Calu3 (cell line): ENCODE measurements at regions of chr16 and their contacts with region 1.

Region 1: DNA sequence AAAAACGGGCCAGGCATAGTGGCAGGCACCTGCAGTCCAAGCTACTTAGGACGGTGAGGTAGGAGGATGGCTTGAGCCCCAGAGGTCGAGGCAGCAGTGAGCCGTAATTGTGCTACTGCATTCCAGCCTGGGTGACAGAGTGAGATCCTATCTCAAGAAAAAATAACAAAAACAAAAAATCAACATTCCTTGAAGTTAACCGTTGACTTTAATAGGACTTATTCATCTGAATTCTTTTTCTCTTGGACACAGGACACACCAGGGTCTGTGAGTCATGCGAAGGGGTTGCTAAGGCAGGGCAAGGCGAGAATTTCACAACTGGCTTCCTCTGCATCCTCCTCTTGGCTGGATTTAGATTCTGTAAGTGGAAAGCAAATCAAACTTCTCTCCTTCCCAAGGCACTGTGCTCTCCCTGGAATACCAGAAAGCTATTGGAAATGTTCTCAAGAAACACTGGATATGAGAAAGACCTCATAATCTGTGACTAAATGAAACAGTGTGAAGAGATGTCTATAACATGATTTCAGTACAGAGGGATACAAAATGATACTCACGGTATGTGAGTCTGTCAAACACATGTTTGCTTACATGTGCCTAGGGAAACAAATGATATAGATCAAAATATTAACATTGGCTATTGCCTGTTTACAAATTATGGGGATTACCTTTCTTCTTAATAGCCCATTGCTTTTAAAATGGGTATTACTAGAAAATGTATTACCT is 99.6 kb downstream of the SYCE1L start:
- DNase-seq: peak; percentile 78
- H3K4me3 Mint-ChIP-seq: peak overlapping the region; percentile 34
- H3K27ac Mint-ChIP-seq: peak overlapping the region; percentile 65
- H3K4me1 Mint-ChIP-seq: peaks cover 39% of the 10 kb centered on the region
- H3K27me3 Mint-ChIP-seq: peaks cover 12% of the 10 kb centered on the region
- CTCF ChIP-seq: no peak

Region 2: DNA sequence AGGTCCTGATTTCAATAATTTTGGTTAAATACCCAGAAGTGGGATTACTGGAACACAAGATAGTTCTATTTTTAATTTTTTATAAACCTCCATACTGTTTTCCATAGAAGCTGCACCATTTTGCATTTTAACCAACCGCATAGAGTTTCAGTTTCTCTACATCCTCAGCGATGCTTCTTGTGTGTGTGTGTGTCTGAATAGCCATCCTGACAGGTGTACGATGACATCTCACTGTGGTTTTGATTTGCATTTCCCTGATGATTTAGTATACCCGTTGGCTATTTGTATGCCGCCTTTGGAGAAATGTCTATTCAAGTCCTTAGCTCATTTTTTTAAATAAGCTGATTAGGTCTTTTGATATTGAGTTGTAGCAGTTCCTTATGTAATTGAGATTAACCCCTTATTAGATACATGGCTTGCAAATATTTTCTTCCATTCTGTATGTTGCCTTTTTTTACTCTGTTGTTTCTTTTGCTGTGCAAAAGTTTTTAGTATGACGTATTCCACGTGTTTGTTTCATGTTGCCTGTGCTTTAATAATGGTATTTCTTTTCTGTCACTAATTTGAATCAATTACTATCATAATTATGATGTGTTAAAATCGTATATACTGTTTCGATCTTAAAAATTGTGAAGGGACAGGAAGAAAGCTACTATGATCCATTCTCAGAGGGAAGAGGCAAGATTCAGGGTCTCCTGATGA is 335.0 kb before region 1 on chr16:
- CTCF ChIA-PET with region 1: no interaction called
- intact Hi-C with region 1: no loop called
- DNase-seq: no peak
- H3K4me3 Mint-ChIP-seq: no peak overlapping the region
- H3K27ac Mint-ChIP-seq: no peak overlapping the region
- H3K4me1 Mint-ChIP-seq: peaks cover 8% of the 10 kb centered on the region
- H3K27me3 Mint-ChIP-seq: no peaks in the 10 kb centered on the region
- CTCF ChIP-seq: no peak

Region 3: DNA sequence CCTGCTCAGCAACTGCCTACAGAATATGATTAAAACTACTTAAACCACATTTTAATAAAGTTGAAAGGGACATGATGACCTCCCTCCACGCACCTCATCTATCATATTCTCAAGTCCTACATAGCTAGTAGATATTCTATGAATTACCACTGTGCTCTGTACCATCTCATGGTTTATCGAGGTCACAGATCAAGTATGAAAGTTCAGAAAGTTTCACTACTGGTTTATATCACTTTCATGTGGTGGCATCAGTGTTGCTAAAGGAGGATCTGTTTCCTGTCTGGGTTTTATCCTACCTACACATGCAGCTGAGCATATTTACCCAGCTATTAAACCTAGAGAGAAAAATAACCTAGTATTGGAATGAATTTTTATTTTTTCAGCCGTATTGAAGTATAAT is 322.7 kb before region 1 on chr16:
- CTCF ChIA-PET with region 1: no interaction called
- intact Hi-C with region 1: no loop called
- DNase-seq: no peak
- H3K4me3 Mint-ChIP-seq: no peak overlapping the region
- H3K27ac Mint-ChIP-seq: no peak overlapping the region
- H3K4me1 Mint-ChIP-seq: peaks cover 5% of the 10 kb centered on the region
- H3K27me3 Mint-ChIP-seq: no peaks in the 10 kb centered on the region
- CTCF ChIP-seq: no peak

Region 4: GRCh38 chr16:77359065-77359502 is 60.3 kb after region 1 on chr16:
- CTCF ChIA-PET with region 1: no interaction called
- intact Hi-C with region 1: loop called (anchors 2 kb)
- DNase-seq: peak; percentile 55
- H3K4me3 Mint-ChIP-seq: peak overlapping the region; percentile 33
- H3K27ac Mint-ChIP-seq: peak overlapping the region; percentile 74
- H3K4me1 Mint-ChIP-seq: peaks cover 51% of the 10 kb centered on the region
- H3K27me3 Mint-ChIP-seq: no peaks in the 10 kb centered on the region
- CTCF ChIP-seq: no peak

Region 5: DNA sequence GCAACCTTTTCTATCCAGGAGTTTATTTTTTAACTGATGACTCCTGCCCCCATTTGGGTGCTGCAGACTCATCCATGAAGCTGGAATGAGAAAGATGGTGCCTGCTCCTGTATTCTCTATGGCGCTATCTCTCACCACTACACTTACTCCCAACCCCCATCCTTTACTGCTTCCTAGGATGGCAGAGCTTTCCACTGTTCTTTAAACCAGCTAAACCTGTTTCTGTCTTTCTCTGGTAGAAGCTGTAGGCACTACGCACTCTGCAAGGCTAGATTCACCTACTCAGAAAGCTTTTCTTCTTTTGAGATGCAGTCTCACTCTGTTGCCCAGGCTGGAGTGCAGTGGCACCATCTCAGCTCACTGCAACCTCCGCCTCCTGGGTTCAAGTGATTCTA is 89.0 kb after region 1 on chr16:
- CTCF ChIA-PET with region 1: no interaction called
- intact Hi-C with region 1: loop called (anchors 2 kb)
- DNase-seq: peak; percentile 22
- H3K4me3 Mint-ChIP-seq: no peak overlapping the region
- H3K27ac Mint-ChIP-seq: peak overlapping the region; percentile 75
- H3K4me1 Mint-ChIP-seq: peaks cover 31% of the 10 kb centered on the region
- H3K27me3 Mint-ChIP-seq: peaks cover 11% of the 10 kb centered on the region
- CTCF ChIP-seq: no peak